Activated B cell treated with CpG ODN at 0.5 μM for 24 hours (primary cell): ENCODE measurements at regions of chr4 and their contacts with region 1.

Region 1: DNA sequence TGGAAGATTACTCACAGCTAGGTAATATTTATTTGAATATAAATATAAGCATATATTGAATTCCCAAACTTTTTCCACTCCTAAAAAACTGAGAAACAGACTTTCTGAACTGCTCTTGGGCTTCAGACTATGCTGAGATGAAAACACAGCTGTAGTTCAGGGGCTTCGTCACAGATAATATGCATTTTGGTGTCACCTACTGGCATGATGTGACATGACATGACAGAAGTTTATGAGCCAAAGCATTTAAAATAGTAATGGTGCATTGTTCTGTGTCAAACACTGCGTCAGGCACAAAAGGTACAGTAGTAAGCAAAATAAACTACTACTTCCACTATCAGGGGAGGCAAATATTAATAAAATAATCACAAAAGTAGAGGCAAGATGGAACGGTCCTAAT is 171.3 kb downstream of the BTC start:
- DNase-seq: no peak
- ATAC-seq: no peak
- H3K4me3 Mint-ChIP-seq: no peak overlapping the region
- H3K27ac Mint-ChIP-seq: no peak overlapping the region
- H3K4me1 Mint-ChIP-seq: no peaks in the 10 kb centered on the region
- H3K27me3 Mint-ChIP-seq: peaks cover 1% of the 10 kb centered on the region
- CTCF ChIP-seq: no peak

Region 2: GRCh38 chr4:73718375-73719373 is 904.4 kb before region 1 on chr4:
- CTCF ChIA-PET with region 1: no interaction called
- POLR2A ChIA-PET with region 1: no interaction called
- intact Hi-C with region 1: no loop called
- DNase-seq: no peak
- ATAC-seq: no peak
- H3K4me3 Mint-ChIP-seq: no peak overlapping the region
- H3K27ac Mint-ChIP-seq: no peak overlapping the region
- H3K4me1 Mint-ChIP-seq: no peaks in the 10 kb centered on the region
- H3K27me3 Mint-ChIP-seq: no peaks in the 10 kb centered on the region
- CTCF ChIP-seq: no peak

Region 3: GRCh38 chr4:73883306-73883705 is 739.7 kb before region 1 on chr4:
- CTCF ChIA-PET with region 1: no interaction called
- POLR2A ChIA-PET with region 1: no interaction called
- intact Hi-C with region 1: no loop called
- DNase-seq: no peak
- ATAC-seq: no peak
- H3K4me3 Mint-ChIP-seq: no peak overlapping the region
- H3K27ac Mint-ChIP-seq: no peak overlapping the region
- H3K4me1 Mint-ChIP-seq: no peaks in the 10 kb centered on the region
- H3K27me3 Mint-ChIP-seq: peaks cover 4% of the 10 kb centered on the region
- CTCF ChIP-seq: no peak

Region 4: GRCh38 chr4:74228691-74229640 is 394.1 kb before region 1 on chr4:
- CTCF ChIA-PET with region 1: interaction called, 5 read pairs
- POLR2A ChIA-PET with region 1: no interaction called
- intact Hi-C with region 1: loop called (anchors 1 kb)
- DNase-seq: peak; percentile 36
- ATAC-seq: peak; percentile 78
- H3K4me3 Mint-ChIP-seq: no peak overlapping the region
- H3K27ac Mint-ChIP-seq: no peak overlapping the region
- H3K4me1 Mint-ChIP-seq: no peaks in the 10 kb centered on the region
- H3K27me3 Mint-ChIP-seq: no peaks in the 10 kb centered on the region
- CTCF ChIP-seq: peak; percentile 60

Region 5: DNA sequence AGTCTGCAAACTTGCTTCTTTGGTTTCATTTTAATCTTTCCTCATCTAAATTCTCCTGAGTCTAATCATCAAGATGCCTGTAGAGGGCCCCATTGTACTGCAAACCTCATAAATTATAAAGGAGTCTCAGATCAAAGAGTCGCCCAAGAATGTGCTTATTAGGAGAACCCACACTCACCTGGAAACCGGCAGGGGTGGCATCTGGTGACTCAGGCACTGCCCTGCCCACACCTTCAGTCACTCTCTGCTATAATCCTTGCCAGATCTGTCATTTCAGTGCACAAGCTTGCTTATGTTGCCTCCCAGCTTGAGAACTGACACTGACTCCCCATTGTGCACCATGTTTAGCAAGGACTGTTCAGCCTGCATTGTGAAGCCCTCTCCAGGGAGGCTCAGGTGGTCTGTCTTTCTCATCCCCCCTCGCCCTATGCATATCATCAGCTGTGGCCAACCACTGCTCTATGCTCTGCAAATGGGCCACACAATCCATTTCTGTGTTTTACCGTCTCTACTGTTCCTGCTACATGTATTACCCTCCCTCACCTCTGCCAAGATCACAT is 302.4 kb before region 1 on chr4:
- CTCF ChIA-PET with region 1: no interaction called
- POLR2A ChIA-PET with region 1: no interaction called
- intact Hi-C with region 1: loop called (anchors 2 kb)
- DNase-seq: no peak
- ATAC-seq: peak; percentile 28
- H3K4me3 Mint-ChIP-seq: no peak overlapping the region
- H3K27ac Mint-ChIP-seq: no peak overlapping the region
- H3K4me1 Mint-ChIP-seq: no peaks in the 10 kb centered on the region
- H3K27me3 Mint-ChIP-seq: peaks cover 25% of the 10 kb centered on the region
- CTCF ChIP-seq: no peak

Region 6: GRCh38 chr4:74376888-74377483 is 246.1 kb before region 1 on chr4:
- CTCF ChIA-PET with region 1: interaction called, 22 read pairs
- POLR2A ChIA-PET with region 1: no interaction called
- intact Hi-C with region 1: loop called (anchors 1 kb)
- DNase-seq: no peak
- ATAC-seq: peak; percentile 52
- H3K4me3 Mint-ChIP-seq: no peak overlapping the region
- H3K27ac Mint-ChIP-seq: no peak overlapping the region
- H3K4me1 Mint-ChIP-seq: no peaks in the 10 kb centered on the region
- H3K27me3 Mint-ChIP-seq: peaks cover 2% of the 10 kb centered on the region
- CTCF ChIP-seq: peak; percentile 63

Region 7: GRCh38 chr4:74543231-74543670 is 79.8 kb before region 1 on chr4:
- CTCF ChIA-PET with region 1: no interaction called
- POLR2A ChIA-PET with region 1: no interaction called
- intact Hi-C with region 1: loop called (anchors 5 kb)
- DNase-seq: no peak
- ATAC-seq: peak; percentile 28
- H3K4me3 Mint-ChIP-seq: peak overlapping the region; percentile 13
- H3K27ac Mint-ChIP-seq: no peak overlapping the region
- H3K4me1 Mint-ChIP-seq: peaks cover 2% of the 10 kb centered on the region
- H3K27me3 Mint-ChIP-seq: no peaks in the 10 kb centered on the region
- CTCF ChIP-seq: no peak